Activated CD4-positive, alpha-beta T cell treated with anti-CD3 and anti-CD28 coated beads for 36 hours (primary cell): ENCODE measurements at regions of chr15 and their contacts with region 1.

Region 1: DNA sequence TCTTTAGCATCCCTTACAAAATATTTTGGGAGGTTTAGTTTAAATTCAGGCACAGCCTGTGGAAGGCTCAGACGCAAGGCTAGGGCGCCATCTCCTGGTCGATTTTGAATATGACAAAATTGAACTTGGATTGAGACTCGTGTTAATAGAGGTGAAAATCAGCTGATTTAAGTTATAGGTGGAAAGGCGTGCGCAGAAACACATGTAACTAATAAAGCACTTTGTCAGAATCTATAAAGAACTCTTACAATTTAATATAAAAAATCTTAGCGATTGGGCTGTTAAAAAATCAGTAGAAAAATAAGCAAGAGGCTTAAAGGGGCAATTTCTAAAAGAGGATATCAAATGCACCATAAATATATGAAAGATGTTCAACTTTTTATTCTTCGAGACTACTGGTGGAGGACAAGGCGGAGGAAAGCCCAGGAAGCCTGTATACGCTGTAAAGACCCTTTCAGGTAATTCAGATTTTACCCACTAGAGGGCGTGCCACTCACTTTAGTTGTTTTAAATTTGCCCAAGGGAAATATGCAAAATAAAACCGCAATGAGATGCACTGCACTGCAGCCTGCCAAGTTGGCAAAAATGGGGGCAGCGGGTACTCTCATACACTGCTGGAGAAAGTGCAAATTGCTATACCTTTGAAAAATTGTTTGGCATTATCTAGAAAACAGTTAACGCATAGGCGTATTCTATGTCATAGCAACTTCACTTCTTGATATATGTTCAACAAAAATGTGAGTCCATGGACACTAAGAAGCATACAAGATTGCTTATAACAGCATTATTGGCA is 64.7 kb downstream of the SLC30A4 start:
- DNase-seq: peak; percentile 82
- ATAC-seq: peak; percentile 59
- H3K4me3 Mint-ChIP-seq: peak overlapping the region; percentile 73
- H3K27ac Mint-ChIP-seq: peak overlapping the region; percentile 80
- H3K4me1 Mint-ChIP-seq: peaks cover 44% of the 10 kb centered on the region
- H3K27me3 Mint-ChIP-seq: no peaks in the 10 kb centered on the region

Region 2: DNA sequence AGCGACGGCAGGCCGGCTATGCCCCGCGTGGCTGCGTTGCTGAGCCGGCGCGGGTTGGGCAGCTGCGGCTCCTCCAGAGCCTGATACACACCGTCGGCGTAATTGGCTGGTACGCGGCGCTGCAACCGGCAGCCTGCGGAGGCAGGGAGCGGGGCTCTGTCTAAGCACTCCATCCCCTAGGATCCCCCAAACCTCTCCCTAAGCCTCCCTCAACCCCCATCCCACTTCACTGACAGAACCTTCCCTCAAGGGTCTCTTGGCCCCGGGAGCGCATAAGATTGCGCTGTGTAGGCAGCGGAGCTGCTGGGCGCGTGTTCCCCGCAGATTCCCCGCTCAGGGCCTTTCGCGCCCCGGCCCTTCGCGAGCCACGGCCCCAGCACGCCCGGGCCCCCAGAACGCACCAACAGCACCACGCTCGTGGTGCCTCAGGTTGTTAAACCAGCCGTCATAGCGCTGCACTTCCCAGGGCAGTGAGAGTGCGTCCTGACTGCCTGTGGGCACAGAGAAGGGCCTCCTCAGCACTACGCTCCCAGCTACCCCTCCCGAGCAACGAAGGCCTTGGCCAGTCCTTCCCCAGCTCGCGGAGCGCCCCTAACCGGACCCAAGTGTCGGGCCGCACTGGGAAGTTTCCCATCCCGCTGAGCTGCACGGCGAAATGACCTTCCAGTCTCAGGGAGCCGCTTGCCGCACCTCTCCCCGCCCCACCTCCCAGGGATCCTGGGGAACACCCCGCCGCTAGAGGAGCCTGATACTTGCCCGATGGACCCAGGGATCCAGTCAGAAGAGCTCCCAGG is 345.1 kb before region 1 on chr15:
- CTCF ChIA-PET with region 1: no interaction called
- POLR2A ChIA-PET with region 1: no interaction called
- intact Hi-C with region 1: no loop called
- DNase-seq: peak; percentile 32
- ATAC-seq: no peak
- H3K4me3 Mint-ChIP-seq: no peak overlapping the region
- H3K27ac Mint-ChIP-seq: no peak overlapping the region
- H3K4me1 Mint-ChIP-seq: peaks cover 38% of the 10 kb centered on the region
- H3K27me3 Mint-ChIP-seq: peaks cover 72% of the 10 kb centered on the region

Region 3: GRCh38 chr15:45198337-45199135 is 259.3 kb before region 1 on chr15:
- CTCF ChIA-PET with region 1: interaction called, 4 read pairs
- POLR2A ChIA-PET with region 1: no interaction called
- intact Hi-C with region 1: loop called (anchors 1 to 5 kb)
- DNase-seq: peak; percentile 94
- ATAC-seq: peak; percentile 63
- H3K4me3 Mint-ChIP-seq: no peak overlapping the region
- H3K27ac Mint-ChIP-seq: no peak overlapping the region
- H3K4me1 Mint-ChIP-seq: peaks cover 14% of the 10 kb centered on the region
- H3K27me3 Mint-ChIP-seq: no peaks in the 10 kb centered on the region

Region 4: GRCh38 chr15:45429974-45430792 is 27.7 kb before region 1 on chr15:
- CTCF ChIA-PET with region 1: interaction called, 93 read pairs
- POLR2A ChIA-PET with region 1: no interaction called
- intact Hi-C with region 1: loop called (anchors 1 kb)
- DNase-seq: peak; percentile 92
- ATAC-seq: peak; percentile 97
- H3K4me3 Mint-ChIP-seq: peak overlapping the region; percentile 56
- H3K27ac Mint-ChIP-seq: no peak overlapping the region
- H3K4me1 Mint-ChIP-seq: peaks cover 2% of the 10 kb centered on the region
- H3K27me3 Mint-ChIP-seq: peaks cover 7% of the 10 kb centered on the region

Region 5: DNA sequence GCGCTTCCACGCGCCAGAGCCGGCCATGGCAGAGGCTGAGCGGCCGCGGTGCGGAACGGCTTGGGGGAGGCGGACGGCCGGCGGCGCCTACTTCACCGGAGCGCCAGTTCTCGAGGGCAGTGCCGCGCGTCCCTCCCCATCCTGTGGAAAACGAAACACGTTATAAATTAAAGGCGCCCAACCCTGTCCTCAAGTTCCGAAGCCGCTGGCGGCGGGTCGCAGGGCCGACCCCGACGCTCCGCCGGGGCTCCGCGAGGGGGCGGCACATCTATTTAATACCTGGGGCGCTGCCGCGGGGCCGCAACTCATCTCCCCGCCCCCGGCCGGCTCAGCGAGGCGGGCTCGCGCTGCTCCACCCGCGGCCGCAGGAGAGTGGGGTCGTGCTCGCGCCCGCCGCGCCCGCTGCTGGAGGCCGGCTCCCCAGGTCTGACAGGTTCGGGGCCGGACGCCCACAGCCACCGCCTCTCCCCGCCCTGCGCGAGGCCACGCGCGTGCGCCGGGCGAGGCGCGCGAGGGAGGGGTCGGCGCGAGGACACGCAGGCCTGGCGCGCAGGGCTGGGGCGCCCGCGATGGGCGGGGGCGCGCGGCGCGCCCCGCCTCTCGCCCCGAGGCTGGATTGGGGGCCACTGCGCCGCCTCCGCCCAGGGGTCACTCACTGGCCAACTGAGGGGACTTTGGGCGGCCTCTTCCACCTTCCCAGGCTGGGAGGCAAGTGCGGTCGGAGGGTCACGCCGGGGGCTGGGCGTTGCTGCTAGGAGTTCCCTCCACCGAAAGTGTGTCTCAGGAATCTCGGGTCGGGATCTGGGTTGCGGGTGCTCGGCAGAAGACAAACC is 64.7 kb after region 1 on chr15 and contains the start of gene SLC30A4:
- CTCF ChIA-PET with region 1: interaction called, 3 read pairs
- POLR2A ChIA-PET with region 1: no interaction called
- intact Hi-C with region 1: loop called (anchors 1 kb)
- DNase-seq: peak; percentile 65
- ATAC-seq: peak; percentile 90
- H3K4me3 Mint-ChIP-seq: peak within 1 kb of the TSS; percentile 89
- H3K27ac Mint-ChIP-seq: peak within 1 kb of the TSS; percentile 67
- H3K4me1 Mint-ChIP-seq: peaks cover 17% of the 10 kb centered on the region
- H3K27me3 Mint-ChIP-seq: peaks cover 2% of the 10 kb centered on the region
- total RNA-seq, gene SLC30A4: 1.6 to 1.9 TPM

Region 6: GRCh38 chr15:45611305-45611704 is 153.5 kb after region 1 on chr15:
- CTCF ChIA-PET with region 1: interaction called, 94 read pairs
- POLR2A ChIA-PET with region 1: no interaction called
- intact Hi-C with region 1: loop called (anchors 1 kb)
- DNase-seq: no peak
- ATAC-seq: no peak
- H3K4me3 Mint-ChIP-seq: no peak overlapping the region
- H3K27ac Mint-ChIP-seq: no peak overlapping the region
- H3K4me1 Mint-ChIP-seq: peaks cover 9% of the 10 kb centered on the region
- H3K27me3 Mint-ChIP-seq: no peaks in the 10 kb centered on the region